ENCODE measurements at regions of chr19 and their contacts with region 1.

Region 1: GRCh38 chr19:16910750-16911445 is 22.1 kb downstream of the F2RL3 start:
- DNase-seq: no peak
- ATAC-seq: no peak
- H3K4me3 ChIP-seq: no peak overlapping the region
- H3K4me3 Mint-ChIP-seq: no peak overlapping the region
- H3K27ac ChIP-seq: no peak overlapping the region
- H3K27ac Mint-ChIP-seq: no peak overlapping the region
- H3K4me1 ChIP-seq: no peaks in the 10 kb centered on the region
- H3K4me1 Mint-ChIP-seq: no peaks in the 10 kb centered on the region
- H3K27me3 ChIP-seq: peaks cover 0 to 22% of the 10 kb centered on the region in 2 experiments
- H3K27me3 Mint-ChIP-seq: peaks cover 0 to 2% of the 10 kb centered on the region in 2 donors

Region 2: GRCh38 chr19:16254851-16255408 is 656.0 kb before region 1 on chr19:
- CTCF ChIA-PET with region 1: no interaction called
- POLR2A ChIA-PET with region 1: interaction called in 1 of 2 experiments, 14 read pairs
- DNase-seq: no peak
- ATAC-seq: no peak
- H3K4me3 ChIP-seq: no peak overlapping the region
- H3K4me3 Mint-ChIP-seq: no peak overlapping the region
- H3K27ac ChIP-seq: no peak overlapping the region
- H3K27ac Mint-ChIP-seq: peak overlapping the region in 1 of 2 donors; percentile 0
- H3K4me1 ChIP-seq: peaks cover 2 to 43% of the 10 kb centered on the region in 2 experiments
- H3K4me1 Mint-ChIP-seq: peaks cover 13 to 34% (median 13%) of the 10 kb centered on the region in 3 donors
- H3K27me3 ChIP-seq: no peaks in the 10 kb centered on the region
- H3K27me3 Mint-ChIP-seq: no peaks in the 10 kb centered on the region